Mammary epithelial cell (primary cell): ENCODE measurements at regions of chr11 and their contacts with region 1.

Region 1: GRCh38 chr11:128948589-128948988 is 5.9 kb upstream of the TP53AIP1 start:
- DNase-seq: no peak
- H3K4me3 ChIP-seq: no peak overlapping the region
- H3K27ac ChIP-seq: no peak overlapping the region
- H3K4me1 ChIP-seq: no peaks in the 10 kb centered on the region
- H3K27me3 ChIP-seq: no peaks in the 10 kb centered on the region
- CTCF ChIP-seq: peak; percentile 2 to 40

Region 2: DNA sequence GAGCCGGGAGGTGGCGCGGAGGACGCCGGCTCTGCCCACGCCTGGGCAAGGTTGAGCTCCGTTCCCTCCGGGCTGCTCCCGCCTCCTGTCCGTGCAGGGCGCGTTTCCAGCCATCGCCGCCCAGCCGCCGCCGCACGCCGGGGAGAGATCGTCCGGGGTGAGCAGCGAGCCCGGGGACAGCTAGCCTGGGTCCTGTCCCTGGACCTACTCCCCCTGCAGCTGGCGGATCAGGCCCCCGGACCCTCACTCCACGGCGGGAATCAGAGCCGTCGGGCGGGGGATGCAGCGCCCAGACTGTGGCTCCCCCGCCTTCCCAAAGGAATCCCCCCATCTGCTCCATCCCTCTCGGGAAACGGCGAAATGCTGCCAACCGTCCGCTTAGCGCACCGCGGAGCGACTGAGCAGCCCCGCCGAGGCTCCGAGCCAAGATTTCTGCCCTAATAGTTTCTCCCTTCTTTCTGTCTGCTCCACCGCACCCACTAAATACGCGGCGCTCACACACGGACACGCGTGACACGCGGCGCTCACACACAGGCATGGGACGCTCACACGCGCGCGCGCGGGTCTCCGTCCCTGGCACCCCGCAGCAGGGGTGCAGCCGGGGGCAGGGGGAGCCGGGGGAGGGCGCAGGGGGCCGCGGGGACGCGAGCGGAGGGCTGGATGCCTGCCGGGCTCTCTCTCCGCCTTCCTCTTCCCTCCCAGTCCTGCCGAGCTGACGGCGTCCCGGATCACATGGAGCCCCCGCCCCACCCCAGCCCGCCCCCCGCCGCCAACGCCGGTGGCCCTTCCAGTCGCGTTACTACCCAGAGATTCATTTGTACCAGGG is 57.8 kb before region 1 on chr11 and contains the start of gene KCNJ5:
- CTCF ChIA-PET with region 1: interaction called, 3 read pairs
- dilution Hi-C with region 1: loop called (anchors 5 kb)
- in situ Hi-C with region 1: loop called in 1 of 2 experiments (anchors 5 kb)
- intact Hi-C with region 1: no loop called
- DNase-seq: peak; percentile 39
- H3K4me3 ChIP-seq: peak within 1 kb of the TSS; percentile 53 to 68 (median 61)
- H3K27ac ChIP-seq: no peak within 1 kb of the TSS
- H3K4me1 ChIP-seq: peaks cover 48% of the 10 kb centered on the region
- H3K27me3 ChIP-seq: no peaks in the 10 kb centered on the region
- CTCF ChIP-seq: peak in 1 of 2 donors; percentile 19
- total RNA-seq, gene KCNJ5: 1.2 to 63.7 TPM

Region 3: DNA sequence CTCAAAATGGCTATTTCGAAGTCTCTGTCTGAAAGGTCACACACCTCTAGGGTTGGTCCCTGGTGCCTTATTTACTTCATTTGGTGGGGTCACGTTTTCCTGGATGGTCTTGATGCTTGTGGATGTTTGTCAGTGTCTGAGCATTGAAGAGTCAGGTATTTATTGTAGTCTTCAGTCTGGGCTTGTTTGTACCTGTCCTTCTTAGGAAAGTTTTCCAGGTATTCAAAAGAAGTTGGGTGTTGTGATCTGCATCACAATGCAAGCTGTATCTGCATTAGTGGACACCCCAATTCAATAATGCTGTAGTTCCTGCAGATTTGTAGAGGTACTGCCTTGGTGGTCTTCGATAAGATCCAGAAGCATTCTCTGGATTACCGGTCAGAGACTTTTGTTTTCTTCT is 57.6 kb after region 1 on chr11:
- CTCF ChIA-PET with region 1: no interaction called
- dilution Hi-C with region 1: loop called (anchors 5 kb)
- in situ Hi-C with region 1: no loop called
- intact Hi-C with region 1: no loop called
- DNase-seq: no peak
- H3K4me3 ChIP-seq: no peak overlapping the region
- H3K27ac ChIP-seq: no peak overlapping the region
- H3K4me1 ChIP-seq: peaks cover 8% of the 10 kb centered on the region
- H3K27me3 ChIP-seq: no peaks in the 10 kb centered on the region
- CTCF ChIP-seq: no peak

Region 4: GRCh38 chr11:129067454-129067853 is 118.9 kb after region 1 on chr11:
- CTCF ChIA-PET with region 1: no interaction called
- dilution Hi-C with region 1: no loop called
- in situ Hi-C with region 1: no loop called
- intact Hi-C with region 1: no loop called
- DNase-seq: peak; percentile 23
- H3K4me3 ChIP-seq: no peak overlapping the region
- H3K27ac ChIP-seq: no peak overlapping the region
- H3K4me1 ChIP-seq: no peaks in the 10 kb centered on the region
- H3K27me3 ChIP-seq: no peaks in the 10 kb centered on the region
- CTCF ChIP-seq: no peak